ENCODE measurements at regions of chr22 and their contacts with region 1.

Region 1: DNA sequence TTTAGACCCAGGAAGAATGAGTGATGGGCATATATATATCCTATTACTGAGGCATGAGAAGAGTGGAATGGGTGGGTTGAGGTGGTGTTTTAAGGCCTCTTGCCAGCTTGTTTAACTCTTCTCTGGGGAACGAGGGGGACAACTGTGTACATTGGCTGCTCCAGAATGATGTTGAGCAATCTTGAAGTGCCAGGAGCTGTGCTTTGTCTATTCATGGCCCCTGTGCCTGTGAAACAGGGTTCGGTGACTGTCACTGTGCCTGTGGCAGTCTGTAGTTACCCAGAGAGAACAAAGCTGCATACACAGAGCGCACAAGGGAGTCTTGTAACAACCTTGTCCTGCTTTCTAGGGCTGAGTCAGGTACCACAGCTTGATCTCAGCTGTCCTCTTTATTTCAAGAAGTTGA is 11.7 kb downstream of the LIMK2 start:
- DNase-seq: no peak
- ATAC-seq: no peak
- H3K4me3 Mint-ChIP-seq: no peak overlapping the region
- H3K27ac Mint-ChIP-seq: no peak overlapping the region
- H3K4me1 Mint-ChIP-seq: peaks cover 32% of the 10 kb centered on the region
- H3K27me3 Mint-ChIP-seq: no peaks in the 10 kb centered on the region
- CTCF ChIP-seq: no peak

Region 2: GRCh38 chr22:31241200-31241599 is 17.4 kb after region 1 on chr22:
- CTCF ChIA-PET with region 1: no interaction called
- POLR2A ChIA-PET with region 1: no interaction called
- intact Hi-C with region 1: no loop called
- DNase-seq: no peak
- ATAC-seq: no peak
- H3K4me3 Mint-ChIP-seq: no peak overlapping the region
- H3K27ac Mint-ChIP-seq: no peak overlapping the region
- H3K4me1 Mint-ChIP-seq: peaks cover 3% of the 10 kb centered on the region
- H3K27me3 Mint-ChIP-seq: no peaks in the 10 kb centered on the region
- CTCF ChIP-seq: no peak

Region 3: GRCh38 chr22:31323578-31324550 is 100.1 kb after region 1 on chr22:
- CTCF ChIA-PET with region 1: no interaction called
- POLR2A ChIA-PET with region 1: interaction called, 11 read pairs
- intact Hi-C with region 1: no loop called
- DNase-seq: no peak
- ATAC-seq: no peak
- H3K4me3 Mint-ChIP-seq: no peak overlapping the region
- H3K27ac Mint-ChIP-seq: no peak overlapping the region
- H3K4me1 Mint-ChIP-seq: peaks cover 3% of the 10 kb centered on the region
- H3K27me3 Mint-ChIP-seq: no peaks in the 10 kb centered on the region
- CTCF ChIP-seq: no peak

Region 4: DNA sequence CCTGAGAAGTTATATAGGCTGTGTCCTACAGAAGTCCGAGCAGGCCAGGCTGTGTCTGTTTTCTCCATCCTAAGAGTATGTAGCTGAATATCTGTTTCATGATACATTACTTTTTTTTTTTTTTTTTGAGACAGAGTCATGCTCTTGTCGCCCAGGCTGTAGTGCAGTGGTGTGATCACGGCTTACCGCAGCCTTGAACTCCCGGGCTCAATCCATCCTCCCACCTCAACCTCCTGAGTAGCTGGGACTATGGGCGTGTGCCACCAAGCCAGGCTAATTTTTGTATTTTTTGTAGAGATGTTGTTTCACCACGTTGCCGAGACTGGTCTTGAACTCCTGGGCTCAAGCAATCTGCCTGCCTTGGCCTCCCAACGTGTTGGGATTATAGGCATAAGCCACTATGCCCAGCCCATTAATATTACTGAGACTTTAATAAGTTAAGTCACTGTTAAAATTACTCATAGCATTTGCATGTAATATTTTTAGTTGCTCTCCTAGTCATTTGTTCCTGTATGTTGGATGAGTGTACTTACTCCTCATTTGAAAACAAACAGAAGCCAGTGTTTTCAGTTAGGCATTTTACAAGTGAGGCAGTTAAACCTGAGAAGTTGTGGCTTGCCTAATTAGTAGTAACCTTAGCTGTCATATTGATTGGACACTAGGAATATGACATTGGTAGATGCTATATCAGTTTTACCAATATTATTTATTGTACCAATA is 201.7 kb after region 1 on chr22:
- CTCF ChIA-PET with region 1: no interaction called
- POLR2A ChIA-PET with region 1: no interaction called
- intact Hi-C with region 1: no loop called
- DNase-seq: no peak
- ATAC-seq: no peak
- H3K4me3 Mint-ChIP-seq: no peak overlapping the region
- H3K27ac Mint-ChIP-seq: no peak overlapping the region
- H3K4me1 Mint-ChIP-seq: no peaks in the 10 kb centered on the region
- H3K27me3 Mint-ChIP-seq: no peaks in the 10 kb centered on the region
- CTCF ChIP-seq: no peak

Measured in activated B cell treated with CpG ODN at 0.5 μM for 24 hours (primary cell).